Head of caudate nucleus (tissue), 42 donors: ENCODE measurements at regions of chr3 and their contacts with region 1.

Region 1: DNA sequence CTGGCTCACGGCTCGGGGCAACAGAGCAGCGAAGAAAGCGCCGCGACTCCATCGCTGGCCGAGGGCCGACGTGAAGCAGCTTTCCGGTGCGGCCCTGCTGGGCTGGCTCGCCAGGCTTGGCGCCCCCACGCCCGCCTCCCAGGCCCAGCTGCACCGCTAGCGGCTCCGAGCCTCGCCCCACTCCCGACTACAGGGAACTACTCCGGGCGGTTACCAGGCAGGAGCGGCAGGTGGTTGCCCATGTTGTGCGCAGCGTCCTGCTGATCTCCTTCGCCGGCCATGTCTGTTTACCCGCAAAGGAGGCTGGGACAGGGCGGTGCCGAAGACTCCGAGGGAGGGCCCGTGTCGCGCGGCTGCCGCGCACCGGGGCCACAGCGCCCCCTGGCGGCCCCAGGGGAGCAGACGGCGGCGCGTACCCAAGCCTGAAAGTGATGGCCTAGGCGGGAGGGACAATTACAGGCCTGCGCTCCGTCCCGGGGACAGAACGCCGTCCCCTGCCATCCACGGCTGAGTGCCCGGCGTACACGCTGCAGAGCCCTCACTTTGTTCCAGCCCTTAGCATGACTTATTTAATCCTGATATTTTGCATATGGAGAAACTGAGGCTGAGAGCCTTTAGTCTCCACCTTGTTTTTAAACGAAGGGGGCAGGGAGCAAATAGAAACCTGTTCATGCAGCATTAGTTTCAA is at the start of gene CRBN:
- DNase-seq: peak; percentile 85 to 97 (median 94)

Region 2: GRCh38 chr3:3126477-3127431 is 52.8 kb before region 1 on chr3 and contains the start of gene TRNT1:
- intact Hi-C with region 1: loop called (anchors 5 kb)
- DNase-seq: peak; percentile 85 to 98 (median 96)

Region 3: GRCh38 chr3:3209714-3210113 is 30.2 kb after region 1 on chr3:
- intact Hi-C with region 1: no loop called
- DNase-seq: no peak